ENCODE measurements at regions of chr18 and their contacts with region 1.

Region 1: GRCh38 chr18:21242141-21242779 is at the start of gene GREB1L:
- DNase-seq: peak; percentile 61 to 79
- ATAC-seq: peak; percentile 93 to 95 (median 94)
- H3K4me3 ChIP-seq: peak within 1 kb of the TSS; percentile 87
- H3K27ac ChIP-seq: no peak within 1 kb of the TSS
- H3K4me1 ChIP-seq: peaks cover 3% of the 10 kb centered on the region
- H3K27me3 ChIP-seq: peaks cover 0 to 5% (median 0%) of the 10 kb centered on the region in 3 donors
- CTCF ChIP-seq: peak; percentile 29
- total RNA-seq, gene GREB1L: 7.8 to 11.3 (median 9.6) TPM

Region 2: GRCh38 chr18:21203096-21203495 is 39.2 kb before region 1 on chr18:
- intact Hi-C with region 1: no loop called
- DNase-seq: no peak
- ATAC-seq: no peak
- H3K4me3 ChIP-seq: no peak overlapping the region
- H3K27ac ChIP-seq: no peak overlapping the region
- H3K4me1 ChIP-seq: no peaks in the 10 kb centered on the region
- H3K27me3 ChIP-seq: no peaks in the 10 kb centered on the region
- CTCF ChIP-seq: no peak

Region 3: DNA sequence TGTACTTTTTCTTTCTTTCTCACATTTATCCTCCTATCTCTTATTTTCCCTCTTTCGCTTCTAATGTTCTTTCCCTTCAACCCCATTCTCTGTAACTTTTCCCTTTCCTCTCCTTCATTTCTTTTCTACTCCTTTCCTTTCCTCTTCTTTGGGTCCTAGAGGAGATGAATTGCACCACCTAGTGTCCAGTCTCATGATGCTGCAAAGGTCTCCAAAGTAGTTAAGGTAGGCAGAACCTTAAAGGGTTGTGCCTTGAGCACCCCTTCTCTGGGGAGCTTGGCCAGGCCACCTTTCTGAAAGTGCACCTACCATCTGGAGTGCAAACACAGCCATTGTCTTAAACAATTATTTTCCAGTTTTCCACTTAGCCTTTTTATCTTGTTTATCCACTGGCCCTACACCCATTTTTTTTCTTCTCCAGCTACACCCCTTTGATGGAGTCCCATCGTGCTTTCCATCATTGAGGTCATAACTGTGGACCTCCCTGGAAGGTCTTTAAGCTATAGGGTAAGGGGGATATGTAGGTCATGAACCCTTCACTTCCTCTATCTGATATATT is 202.3 kb after region 1 on chr18:
- intact Hi-C with region 1: loop called (anchors 5 to 10 kb)
- DNase-seq: no peak
- ATAC-seq: peak; percentile 27 to 80 (median 70)
- H3K4me3 ChIP-seq: peak overlapping the region; percentile 37
- H3K27ac ChIP-seq: no peak overlapping the region
- H3K4me1 ChIP-seq: peaks cover 61% of the 10 kb centered on the region
- H3K27me3 ChIP-seq: no peaks in the 10 kb centered on the region
- CTCF ChIP-seq: peak; percentile 62

Measured in psoas muscle (tissue), 8 donors.